ENCODE measurements at regions of chr6 and their contacts with region 1.

Region 1: GRCh38 chr6:41787219-41787917 is at the start of gene TOMM6:
- DNase-seq: peak; percentile 87 to 96 (median 94)
- ATAC-seq: peak; percentile 88
- H3K4me3 ChIP-seq: peak within 1 kb of the TSS; percentile 97
- H3K4me3 Mint-ChIP-seq: peak within 1 kb of the TSS; percentile 91 to 99 (median 97)
- H3K27ac ChIP-seq: peak within 1 kb of the TSS; percentile 89
- H3K27ac Mint-ChIP-seq: peak within 1 kb of the TSS; percentile 95 to 99 (median 98)
- H3K4me1 ChIP-seq: peaks cover 6 to 9% of the 10 kb centered on the region in 2 donors
- H3K4me1 Mint-ChIP-seq: peaks cover 8 to 29% (median 17%) of the 10 kb centered on the region in 7 donors
- H3K27me3 ChIP-seq: no peaks in the 10 kb centered on the region
- H3K27me3 Mint-ChIP-seq: peaks cover 0 to 14% (median 0%) of the 10 kb centered on the region in 5 donors
- total RNA-seq, gene TOMM6: 114 to 193 (median 128) TPM

Region 2: GRCh38 chr6:41602864-41603608 is 184.3 kb before region 1 on chr6:
- CTCF ChIA-PET with region 1: no interaction called
- POLR2A ChIA-PET with region 1: no interaction called
- intact Hi-C with region 1: loop called in 1 of 2 experiments (anchors 1 kb)
- DNase-seq: peak; percentile 49 to 78 (median 68)
- ATAC-seq: peak; percentile 86
- H3K4me3 ChIP-seq: no peak overlapping the region
- H3K4me3 Mint-ChIP-seq: peak overlapping the region in 6 of 10 donors; percentile 24 to 56 (median 34)
- H3K27ac ChIP-seq: no peak overlapping the region
- H3K27ac Mint-ChIP-seq: no peak overlapping the region
- H3K4me1 ChIP-seq: peaks cover 4 to 7% of the 10 kb centered on the region in 2 donors
- H3K4me1 Mint-ChIP-seq: peaks cover 4 to 7% (median 5%) of the 10 kb centered on the region in 7 donors
- H3K27me3 ChIP-seq: no peaks in the 10 kb centered on the region
- H3K27me3 Mint-ChIP-seq: peaks cover 0 to 7% (median 0%) of the 10 kb centered on the region in 5 donors

Region 3: DNA sequence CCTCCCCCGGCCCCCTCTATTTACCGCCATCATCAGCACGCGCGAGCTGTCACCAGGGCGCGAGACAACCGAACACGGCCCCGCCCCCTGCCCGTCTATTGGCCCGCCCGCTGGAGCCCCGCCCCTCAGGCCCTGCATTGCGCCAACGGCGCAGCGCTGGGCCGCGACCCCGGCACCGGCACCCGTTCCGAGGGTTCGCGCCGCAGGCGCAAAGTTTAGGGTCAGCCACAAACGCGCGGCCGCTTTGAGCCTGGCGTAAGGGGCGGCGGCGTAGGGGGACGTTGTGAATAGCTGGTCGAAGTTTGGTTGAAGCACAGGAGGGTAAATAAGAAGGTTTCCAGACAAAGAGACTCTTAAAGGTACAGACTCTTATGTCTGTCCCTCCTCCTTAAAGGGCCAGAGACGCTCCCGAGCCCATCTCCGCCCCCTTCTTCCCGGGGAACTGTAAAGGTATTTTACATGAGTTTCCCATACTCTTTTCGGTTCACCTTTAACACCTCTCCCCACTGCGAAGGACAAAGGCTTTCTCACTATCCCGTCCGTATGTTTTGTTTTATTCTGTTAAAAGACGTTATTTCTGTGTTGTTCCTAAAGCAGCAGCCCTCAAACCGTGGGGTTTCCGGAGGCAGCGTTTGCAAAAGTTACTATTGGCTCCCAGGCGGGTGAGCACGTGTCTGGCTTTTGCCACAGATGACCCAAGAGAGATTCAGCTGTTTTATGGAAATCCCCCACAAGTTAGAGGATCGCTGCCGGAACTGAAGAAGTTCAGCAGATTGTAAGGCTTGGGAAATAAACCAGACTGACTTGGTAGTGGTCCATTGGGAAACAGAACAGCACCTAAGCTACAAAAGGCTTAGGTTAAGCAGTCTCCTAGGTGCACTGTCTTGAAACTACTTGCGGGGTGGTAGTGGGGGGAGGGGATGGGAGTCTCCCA is 108.2 kb after region 1 on chr6 and contains the start of gene USP49:
- CTCF ChIA-PET with region 1: interaction called, 5 read pairs
- POLR2A ChIA-PET with region 1: interaction called, 4 read pairs
- intact Hi-C with region 1: loop called (anchors 1 kb)
- DNase-seq: peak; percentile 83 to 92 (median 90)
- ATAC-seq: peak; percentile 97
- H3K4me3 ChIP-seq: peak within 1 kb of the TSS; percentile 69
- H3K4me3 Mint-ChIP-seq: peak within 1 kb of the TSS in 1 of 10 donors; percentile 94
- H3K27ac ChIP-seq: peak within 1 kb of the TSS; percentile 76
- H3K27ac Mint-ChIP-seq: peak within 1 kb of the TSS in 7 of 9 donors; percentile 78 to 97 (median 93)
- H3K4me1 ChIP-seq: peaks cover 14 to 26% of the 10 kb centered on the region in 2 donors
- H3K4me1 Mint-ChIP-seq: peaks cover 5 to 17% (median 11%) of the 10 kb centered on the region in 7 donors
- H3K27me3 ChIP-seq: no peaks in the 10 kb centered on the region
- H3K27me3 Mint-ChIP-seq: peaks cover 0 to 7% (median 0%) of the 10 kb centered on the region in 5 donors
- total RNA-seq, gene USP49: 1.8 to 6.0 (median 3.1) TPM

Region 4: DNA sequence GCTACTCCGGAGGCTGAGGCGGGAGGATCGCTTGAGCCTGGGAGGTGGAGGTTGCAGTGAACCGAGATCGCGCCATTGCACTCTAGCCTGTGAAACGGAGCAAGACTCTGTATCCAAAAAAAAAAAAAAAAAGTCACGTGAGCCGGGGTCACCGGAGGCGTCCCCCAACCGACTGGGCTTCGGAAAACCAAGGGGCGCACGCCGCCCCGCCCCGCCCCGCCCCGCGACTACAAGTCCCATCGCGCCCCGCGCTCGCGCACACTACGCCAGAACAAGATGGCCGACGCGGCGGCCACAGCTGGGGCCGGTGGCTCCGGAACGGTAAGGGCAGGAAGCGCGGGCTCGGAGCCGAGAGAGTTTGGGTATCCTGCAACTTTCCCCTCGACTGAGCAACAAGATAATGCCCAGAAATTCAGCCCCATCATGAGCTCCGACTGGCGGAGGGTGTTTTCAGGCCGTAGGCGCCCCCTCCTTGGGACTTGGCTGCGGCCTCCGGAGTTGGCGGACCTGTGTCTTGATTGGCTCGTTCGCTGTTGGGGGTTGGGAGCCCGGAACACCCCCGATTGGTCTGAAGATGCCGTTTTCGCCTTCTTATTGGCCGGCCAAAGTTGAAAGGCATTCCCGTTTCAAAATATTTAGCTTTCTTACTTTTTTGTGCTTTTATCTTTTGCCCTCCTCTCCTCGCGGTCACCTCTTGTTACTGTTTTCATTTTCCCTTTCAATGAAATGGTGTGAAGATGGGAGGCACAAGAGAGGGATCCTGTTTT is 263.1 kb after region 1 on chr6 and contains the start of gene TAF8:
- CTCF ChIA-PET with region 1: interaction called, 49 read pairs
- POLR2A ChIA-PET with region 1: interaction called, 79 read pairs
- intact Hi-C with region 1: loop called (anchors 1 kb)
- DNase-seq: peak; percentile 76 to 89 (median 87)
- ATAC-seq: peak; percentile 80
- H3K4me3 ChIP-seq: peak within 1 kb of the TSS; percentile 98
- H3K4me3 Mint-ChIP-seq: peak within 1 kb of the TSS; percentile 89 to 99 (median 99)
- H3K27ac ChIP-seq: peak within 1 kb of the TSS; percentile 78
- H3K27ac Mint-ChIP-seq: peak within 1 kb of the TSS; percentile 93 to 98 (median 97)
- H3K4me1 ChIP-seq: peaks cover 24 to 27% of the 10 kb centered on the region in 2 donors
- H3K4me1 Mint-ChIP-seq: peaks cover 36 to 70% (median 51%) of the 10 kb centered on the region in 7 donors
- H3K27me3 ChIP-seq: no peaks in the 10 kb centered on the region
- H3K27me3 Mint-ChIP-seq: no peaks in the 10 kb centered on the region
- total RNA-seq, gene TAF8: 41.6 to 58.2 (median 50.8) TPM

Region 5: GRCh38 chr6:42453031-42453653 is 665.8 kb after region 1 on chr6:
- CTCF ChIA-PET with region 1: no interaction called
- POLR2A ChIA-PET with region 1: no interaction called
- intact Hi-C with region 1: loop called in 1 of 2 experiments (anchors 2 kb)
- DNase-seq: peak; percentile 47 to 80 (median 78)
- ATAC-seq: peak; percentile 85
- H3K4me3 ChIP-seq: peak overlapping the region; percentile 80
- H3K4me3 Mint-ChIP-seq: peak overlapping the region; percentile 84 to 100 (median 96)
- H3K27ac ChIP-seq: peak overlapping the region; percentile 56
- H3K27ac Mint-ChIP-seq: peak overlapping the region in 8 of 9 donors; percentile 11 to 93 (median 72)
- H3K4me1 ChIP-seq: peaks cover 4 to 20% of the 10 kb centered on the region in 2 donors
- H3K4me1 Mint-ChIP-seq: peaks cover 25 to 41% (median 33%) of the 10 kb centered on the region in 7 donors
- H3K27me3 ChIP-seq: no peaks in the 10 kb centered on the region
- H3K27me3 Mint-ChIP-seq: peaks cover 0 to 11% (median 0%) of the 10 kb centered on the region in 5 donors

Region 6: DNA sequence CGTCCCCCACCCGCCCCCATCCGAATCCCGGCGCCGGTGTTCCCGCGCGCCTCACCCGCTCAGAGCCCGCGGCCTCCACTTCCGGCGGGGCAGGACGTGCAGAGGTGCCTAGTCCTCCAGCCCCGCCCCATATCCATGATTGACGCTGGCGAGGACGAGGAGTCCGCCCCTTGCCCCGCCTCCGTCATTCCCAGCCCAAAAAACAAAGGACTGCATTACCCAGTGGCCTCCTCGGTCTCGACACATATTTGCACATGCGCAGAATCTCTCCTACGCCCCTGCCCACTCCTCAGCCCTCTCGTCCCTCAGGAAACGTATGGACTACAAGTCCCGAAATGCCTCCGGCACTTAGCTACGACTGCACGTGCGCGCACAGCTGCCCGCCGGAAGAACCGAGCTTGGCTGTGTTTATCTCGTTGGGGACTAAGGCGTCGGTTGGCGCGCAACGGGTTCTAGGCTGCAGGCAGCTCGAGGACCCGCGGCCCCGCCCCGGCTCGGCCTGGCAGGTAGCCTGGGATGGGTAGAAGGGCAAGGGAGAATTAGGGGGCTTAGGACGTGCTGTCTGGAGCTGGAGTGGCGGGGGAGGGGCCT is 1226.6 kb after region 1 on chr6 and contains the starts of genes KLHDC3 and MEA1:
- CTCF ChIA-PET with region 1: no interaction called
- POLR2A ChIA-PET with region 1: no interaction called
- intact Hi-C with region 1: loop called in 1 of 2 experiments (anchors 1 kb)
- DNase-seq: peak; percentile 83 to 100 (median 99)
- ATAC-seq: peak; percentile 98
- H3K4me3 ChIP-seq: peak within 1 kb of the TSS; percentile 73
- H3K4me3 Mint-ChIP-seq: peak within 1 kb of the TSS; percentile 85 to 99 (median 92)
- H3K27ac ChIP-seq: peak within 1 kb of the TSS; percentile 84
- H3K27ac Mint-ChIP-seq: peak within 1 kb of the TSS; percentile 82 to 97 (median 92)
- H3K4me1 ChIP-seq: peaks cover 20 to 31% of the 10 kb centered on the region in 2 donors
- H3K4me1 Mint-ChIP-seq: peaks cover 45 to 78% (median 58%) of the 10 kb centered on the region in 7 donors
- H3K27me3 ChIP-seq: no peaks in the 10 kb centered on the region
- H3K27me3 Mint-ChIP-seq: peaks cover 0 to 3% (median 0%) of the 10 kb centered on the region in 5 donors
- total RNA-seq, gene KLHDC3: 39.9 to 76.9 (median 67.4) TPM
- total RNA-seq, gene MEA1: 20.3 to 58.0 (median 32.7) TPM

Region 7: GRCh38 chr6:43120944-43121913 is 1333.9 kb after region 1 on chr6:
- CTCF ChIA-PET with region 1: no interaction called
- POLR2A ChIA-PET with region 1: no interaction called
- intact Hi-C with region 1: no loop called
- DNase-seq: no peak
- ATAC-seq: no peak
- H3K4me3 ChIP-seq: no peak overlapping the region
- H3K4me3 Mint-ChIP-seq: no peak overlapping the region
- H3K27ac ChIP-seq: no peak overlapping the region
- H3K27ac Mint-ChIP-seq: no peak overlapping the region
- H3K4me1 ChIP-seq: no peaks in the 10 kb centered on the region
- H3K4me1 Mint-ChIP-seq: peaks cover 0 to 2% (median 0%) of the 10 kb centered on the region in 7 donors
- H3K27me3 ChIP-seq: no peaks in the 10 kb centered on the region
- H3K27me3 Mint-ChIP-seq: peaks cover 0 to 5% (median 0%) of the 10 kb centered on the region in 5 donors